ENCODE measurements at regions of chr11 and their contacts with region 1.

Region 1: GRCh38 chr11:78564490-78565467 is 9.9 kb downstream of the NARS2 start:
- DNase-seq: peak; percentile 49
- H3K4me3 ChIP-seq: no peak overlapping the region
- H3K27ac ChIP-seq: no peak overlapping the region
- H3K27me3 ChIP-seq: no peaks in the 10 kb centered on the region
- CTCF ChIP-seq: peak; percentile 73

Region 2: GRCh38 chr11:78149646-78150045 is 415.1 kb before region 1 on chr11:
- CTCF ChIA-PET with region 1: interaction called, 61 read pairs
- POLR2A ChIA-PET with region 1: no interaction called
- DNase-seq: peak; percentile 47
- H3K4me3 ChIP-seq: no peak overlapping the region
- H3K27ac ChIP-seq: no peak overlapping the region
- H3K27me3 ChIP-seq: no peaks in the 10 kb centered on the region
- CTCF ChIP-seq: peak; percentile 49

Region 3: DNA sequence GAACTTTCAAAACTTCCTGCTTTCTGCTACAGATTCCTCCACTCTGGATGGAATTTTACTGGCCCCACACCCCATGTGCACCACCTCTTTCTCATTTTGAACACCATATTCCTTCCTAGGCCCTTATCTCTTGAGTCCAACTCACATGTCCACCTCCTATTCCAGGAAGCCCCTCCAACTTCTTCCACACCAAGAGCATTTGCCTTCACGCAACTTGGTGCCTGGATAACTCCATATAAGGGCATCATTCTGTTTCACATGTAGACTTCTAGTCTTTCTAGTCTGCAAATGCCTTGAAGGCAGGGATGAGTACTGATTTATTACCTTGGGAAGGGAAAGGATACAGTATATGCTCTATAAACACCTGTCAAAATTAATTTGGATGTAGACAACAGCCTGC is 164.7 kb before region 1 on chr11:
- CTCF ChIA-PET with region 1: interaction called, 10 read pairs
- POLR2A ChIA-PET with region 1: no interaction called
- DNase-seq: no peak
- H3K4me3 ChIP-seq: no peak overlapping the region
- H3K27ac ChIP-seq: no peak overlapping the region
- H3K27me3 ChIP-seq: no peaks in the 10 kb centered on the region
- CTCF ChIP-seq: no peak

Region 4: DNA sequence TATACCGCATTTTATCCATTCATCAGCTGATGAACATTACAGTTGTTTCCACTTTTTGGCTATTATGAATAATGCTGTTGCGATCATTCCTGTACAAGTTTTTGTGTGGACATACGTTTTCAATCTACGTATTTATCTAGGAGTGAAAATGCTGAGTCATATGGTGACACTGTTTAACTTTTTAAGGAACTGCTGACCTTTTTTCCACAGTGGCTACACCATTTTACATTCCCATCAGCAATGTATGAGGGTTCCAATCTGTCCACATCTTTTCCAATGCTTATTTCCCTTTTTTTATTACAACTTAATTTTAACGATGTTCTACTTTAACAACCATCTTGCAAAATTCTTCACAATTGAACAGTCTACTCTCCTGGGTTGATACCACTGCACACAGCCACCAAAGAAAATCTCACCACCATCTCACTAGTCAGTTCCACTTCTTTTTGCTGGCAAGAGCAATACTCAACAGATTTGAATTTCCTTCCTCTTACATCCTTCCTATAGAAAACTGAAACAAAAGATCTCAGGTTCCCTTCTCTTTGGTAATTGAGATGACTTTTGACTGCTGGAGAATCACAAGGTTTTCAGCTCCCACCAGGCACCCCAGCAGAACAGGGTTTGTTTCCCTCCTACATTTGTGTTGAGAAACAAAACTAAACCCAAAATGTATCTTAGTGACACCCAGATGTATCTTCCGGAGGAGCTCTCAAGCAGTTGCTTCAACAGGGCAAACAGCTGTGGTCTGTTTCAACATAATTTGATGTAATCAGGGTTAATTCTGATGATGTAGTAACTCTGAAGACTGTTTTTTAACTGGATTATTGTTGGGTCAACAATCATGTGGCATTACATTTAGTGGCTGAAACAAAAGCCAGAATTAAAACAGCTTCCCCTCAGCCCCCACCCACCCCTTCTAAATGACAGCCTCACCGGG is 140.2 kb before region 1 on chr11:
- CTCF ChIA-PET with region 1: interaction called, 55 read pairs
- POLR2A ChIA-PET with region 1: no interaction called
- DNase-seq: no peak
- H3K4me3 ChIP-seq: no peak overlapping the region
- H3K27ac ChIP-seq: peak overlapping the region; percentile 40
- H3K27me3 ChIP-seq: no peaks in the 10 kb centered on the region
- CTCF ChIP-seq: no peak

Region 5: GRCh38 chr11:78504181-78504580 is 60.6 kb before region 1 on chr11:
- CTCF ChIA-PET with region 1: interaction called, 11 read pairs
- POLR2A ChIA-PET with region 1: no interaction called
- DNase-seq: no peak
- H3K4me3 ChIP-seq: no peak overlapping the region
- H3K27ac ChIP-seq: no peak overlapping the region
- H3K27me3 ChIP-seq: no peaks in the 10 kb centered on the region
- CTCF ChIP-seq: no peak

Region 6: DNA sequence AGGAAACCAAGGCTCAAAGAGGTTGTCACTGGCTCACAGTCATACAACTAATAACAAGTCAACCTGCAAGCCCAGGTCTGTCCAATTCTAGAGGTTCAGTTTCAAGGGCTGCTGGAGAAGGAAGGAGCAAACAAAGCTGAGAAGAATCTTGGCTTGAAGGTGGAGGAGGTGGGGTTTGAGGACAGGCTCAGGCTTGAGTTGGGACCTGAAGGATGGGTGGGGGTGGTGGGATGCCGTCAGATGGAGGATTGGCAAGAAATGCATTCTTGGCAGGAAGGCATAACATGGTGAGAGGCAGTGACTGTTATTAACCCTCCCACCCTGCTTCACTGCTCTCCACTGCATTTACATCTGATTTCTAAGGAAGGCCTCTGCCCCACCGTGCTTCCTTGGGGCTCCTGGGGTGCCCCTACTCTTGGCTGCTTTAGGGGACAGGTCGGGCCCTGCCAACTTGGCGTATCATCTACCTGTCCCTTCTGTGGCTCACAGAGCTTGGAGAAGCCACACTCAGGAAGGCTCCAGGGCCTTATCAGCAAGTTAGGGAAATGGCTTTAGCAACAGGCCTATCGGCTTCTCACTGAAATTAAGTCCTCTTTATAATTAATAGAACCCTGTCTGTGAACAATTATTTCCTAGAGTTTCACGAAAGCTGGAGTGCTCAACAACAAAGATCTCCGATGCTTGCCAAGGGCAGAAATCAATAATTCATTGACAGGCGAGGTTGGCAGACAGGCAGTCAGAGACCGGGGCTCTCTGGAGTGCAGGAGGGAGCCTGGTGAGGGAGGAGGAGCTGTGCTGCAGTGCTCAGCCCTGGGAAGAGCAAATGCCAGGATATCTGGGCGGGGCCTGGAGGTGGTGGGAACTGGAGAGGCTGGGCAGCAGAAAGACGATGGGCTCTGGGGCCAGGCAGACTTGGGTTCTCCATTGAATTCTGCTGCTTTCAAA is 94.8 kb after region 1 on chr11:
- CTCF ChIA-PET with region 1: no interaction called
- POLR2A ChIA-PET with region 1: no interaction called
- DNase-seq: no peak
- H3K4me3 ChIP-seq: no peak overlapping the region
- H3K27ac ChIP-seq: no peak overlapping the region
- H3K27me3 ChIP-seq: no peaks in the 10 kb centered on the region
- CTCF ChIP-seq: no peak

Measured in AG04450 (cell line).